CD8-positive, alpha-beta T cell (primary cell): ENCODE measurements at regions of chr2 and their contacts with region 1.

Region 1: GRCh38 chr2:110876243-110876999 is 144.0 kb downstream of the ACOXL start:
- DNase-seq: peak in 1 of 9 experiments; percentile 30
- ATAC-seq: no peak
- H3K4me3 ChIP-seq: no peak overlapping the region
- H3K4me3 Mint-ChIP-seq: peak overlapping the region; percentile 74
- H3K27ac ChIP-seq: no peak overlapping the region
- H3K27ac Mint-ChIP-seq: peak overlapping the region; percentile 77
- H3K4me1 ChIP-seq: peaks cover 33% of the 10 kb centered on the region
- H3K4me1 Mint-ChIP-seq: peaks cover 29% of the 10 kb centered on the region
- H3K27me3 ChIP-seq: no peaks in the 10 kb centered on the region
- H3K27me3 Mint-ChIP-seq: no peaks in the 10 kb centered on the region
- CTCF ChIP-seq: no peak

Region 2: DNA sequence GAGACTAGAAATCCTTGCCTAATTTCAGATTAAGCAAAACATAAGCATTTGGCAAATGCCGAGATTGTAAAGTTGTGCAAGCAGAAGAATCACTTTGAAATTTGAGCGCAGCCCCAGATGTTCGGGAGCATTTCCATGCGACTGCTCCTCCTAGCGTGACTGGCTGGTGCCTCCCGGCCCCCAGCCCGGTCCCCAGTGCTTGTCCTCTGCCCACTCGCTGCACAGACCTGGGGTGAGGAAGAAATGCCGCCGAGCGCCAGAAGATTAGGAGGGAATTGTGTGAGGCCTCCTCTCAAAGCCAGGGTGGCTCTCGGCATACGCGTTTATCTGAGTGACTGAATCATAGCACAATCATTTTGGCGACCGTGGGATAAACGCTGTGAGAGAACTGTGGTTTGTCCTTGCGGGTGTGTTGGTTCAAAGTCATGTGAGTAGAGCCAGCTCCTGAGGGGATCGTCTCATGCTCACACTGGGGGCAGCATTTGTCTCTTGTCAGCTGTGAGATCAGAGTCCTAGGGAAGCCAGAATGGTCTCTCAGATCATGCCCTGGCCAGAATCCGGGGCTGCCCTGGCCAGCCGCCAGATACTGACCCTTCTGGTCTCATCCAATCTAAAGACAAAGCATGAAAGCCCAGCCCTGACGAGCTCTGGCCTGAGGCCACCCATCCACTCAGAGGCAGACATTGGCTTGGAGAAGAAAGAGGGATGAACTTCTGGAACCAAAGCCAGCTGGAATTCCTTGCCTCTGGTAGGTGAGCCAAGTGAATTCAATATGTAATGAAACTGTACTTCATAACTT is 1558.1 kb before region 1 on chr2:
- CTCF ChIA-PET with region 1: no interaction called
- POLR2A ChIA-PET with region 1: no interaction called
- intact Hi-C with region 1: no loop called
- DNase-seq: no peak
- ATAC-seq: no peak
- H3K4me3 ChIP-seq: no peak overlapping the region
- H3K4me3 Mint-ChIP-seq: no peak overlapping the region
- H3K27ac ChIP-seq: no peak overlapping the region
- H3K27ac Mint-ChIP-seq: no peak overlapping the region
- H3K4me1 ChIP-seq: peaks cover 20% of the 10 kb centered on the region
- H3K4me1 Mint-ChIP-seq: peaks cover 35% of the 10 kb centered on the region
- H3K27me3 ChIP-seq: no peaks in the 10 kb centered on the region
- H3K27me3 Mint-ChIP-seq: no peaks in the 10 kb centered on the region
- CTCF ChIP-seq: no peak

Region 3: GRCh38 chr2:110639972-110640371 is 236.4 kb before region 1 on chr2:
- CTCF ChIA-PET with region 1: no interaction called
- POLR2A ChIA-PET with region 1: no interaction called
- intact Hi-C with region 1: no loop called
- DNase-seq: no peak
- ATAC-seq: no peak
- H3K4me3 ChIP-seq: no peak overlapping the region
- H3K4me3 Mint-ChIP-seq: no peak overlapping the region
- H3K27ac ChIP-seq: no peak overlapping the region
- H3K27ac Mint-ChIP-seq: peak overlapping the region; percentile 28
- H3K4me1 ChIP-seq: no peaks in the 10 kb centered on the region
- H3K4me1 Mint-ChIP-seq: no peaks in the 10 kb centered on the region
- H3K27me3 ChIP-seq: no peaks in the 10 kb centered on the region
- H3K27me3 Mint-ChIP-seq: no peaks in the 10 kb centered on the region
- CTCF ChIP-seq: no peak

Region 4: GRCh38 chr2:110802208-110802932 is 74.1 kb before region 1 on chr2:
- CTCF ChIA-PET with region 1: no interaction called
- POLR2A ChIA-PET with region 1: no interaction called
- intact Hi-C with region 1: no loop called
- DNase-seq: no peak
- ATAC-seq: no peak
- H3K4me3 ChIP-seq: no peak overlapping the region
- H3K4me3 Mint-ChIP-seq: no peak overlapping the region
- H3K27ac ChIP-seq: no peak overlapping the region
- H3K27ac Mint-ChIP-seq: no peak overlapping the region
- H3K4me1 ChIP-seq: no peaks in the 10 kb centered on the region
- H3K4me1 Mint-ChIP-seq: peaks cover 7% of the 10 kb centered on the region
- H3K27me3 ChIP-seq: peaks cover 0 to 4% of the 10 kb centered on the region in 2 experiments
- H3K27me3 Mint-ChIP-seq: peaks cover 26% of the 10 kb centered on the region
- CTCF ChIP-seq: no peak

Region 5: DNA sequence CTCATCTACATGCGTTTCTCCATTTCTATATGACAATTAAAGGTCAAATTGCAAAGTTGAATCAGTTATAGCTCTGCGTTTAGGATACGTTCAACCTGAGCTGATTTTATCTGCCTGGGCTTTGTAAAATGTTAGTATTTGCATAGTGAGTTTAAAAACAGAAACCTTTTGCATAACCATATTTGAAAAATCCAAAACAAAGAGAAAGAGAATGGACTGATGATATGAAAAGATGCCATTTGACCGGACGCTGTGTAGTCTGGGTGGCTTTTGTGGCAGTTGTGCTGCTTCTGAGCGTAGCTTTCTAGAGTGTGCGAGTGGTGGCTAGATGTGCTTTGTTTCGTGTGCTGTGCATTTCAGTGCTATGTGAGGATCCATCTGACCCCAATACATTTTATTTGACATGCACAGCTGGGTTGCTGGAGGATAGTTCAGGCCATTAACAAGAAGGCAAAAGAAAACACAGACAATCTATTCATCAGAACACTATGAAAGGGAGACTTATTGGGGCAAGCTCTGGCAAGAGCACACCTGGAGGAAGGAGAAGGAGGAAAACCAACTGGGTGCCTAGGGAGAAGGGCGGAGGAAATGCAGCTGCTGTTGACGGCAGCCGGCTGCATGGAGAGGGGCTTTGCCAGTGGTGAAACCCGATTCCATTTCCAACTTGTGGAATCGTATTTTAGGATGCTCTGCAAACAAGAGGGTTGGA is 17.3 kb before region 1 on chr2:
- CTCF ChIA-PET with region 1: interaction called, 9 read pairs
- POLR2A ChIA-PET with region 1: interaction called, 14 read pairs
- intact Hi-C with region 1: loop called in 1 of 2 experiments (anchors 1 kb)
- DNase-seq: peak in 2 of 9 experiments; percentile 21 to 51
- ATAC-seq: no peak
- H3K4me3 ChIP-seq: peak overlapping the region; percentile 19 to 24
- H3K4me3 Mint-ChIP-seq: peak overlapping the region; percentile 70
- H3K27ac ChIP-seq: peak overlapping the region; percentile 49 to 59
- H3K27ac Mint-ChIP-seq: peak overlapping the region; percentile 94
- H3K4me1 ChIP-seq: peaks cover 36% of the 10 kb centered on the region
- H3K4me1 Mint-ChIP-seq: peaks cover 47% of the 10 kb centered on the region
- H3K27me3 ChIP-seq: no peaks in the 10 kb centered on the region
- H3K27me3 Mint-ChIP-seq: no peaks in the 10 kb centered on the region
- CTCF ChIP-seq: no peak